ENCODE measurements at regions of chr6 and their contacts with region 1.

Region 1: GRCh38 chr6:45156075-45156474 is 172.1 kb upstream of the RUNX2 start:
- DNase-seq: no peak
- ATAC-seq: no peak
- H3K4me3 ChIP-seq: no peak overlapping the region
- H3K27ac ChIP-seq: no peak overlapping the region
- H3K4me1 ChIP-seq: no peaks in the 10 kb centered on the region
- H3K27me3 ChIP-seq: no peaks in the 10 kb centered on the region
- CTCF ChIP-seq: no peak

Region 2: GRCh38 chr6:44735630-44735963 is 420.5 kb before region 1 on chr6:
- intact Hi-C with region 1: no loop called
- DNase-seq: no peak
- ATAC-seq: no peak
- H3K4me3 ChIP-seq: no peak overlapping the region
- H3K27ac ChIP-seq: no peak overlapping the region
- H3K4me1 ChIP-seq: peaks cover 0 to 20% (median 4%) of the 10 kb centered on the region in 9 donors
- H3K27me3 ChIP-seq: no peaks in the 10 kb centered on the region
- CTCF ChIP-seq: no peak

Region 3: DNA sequence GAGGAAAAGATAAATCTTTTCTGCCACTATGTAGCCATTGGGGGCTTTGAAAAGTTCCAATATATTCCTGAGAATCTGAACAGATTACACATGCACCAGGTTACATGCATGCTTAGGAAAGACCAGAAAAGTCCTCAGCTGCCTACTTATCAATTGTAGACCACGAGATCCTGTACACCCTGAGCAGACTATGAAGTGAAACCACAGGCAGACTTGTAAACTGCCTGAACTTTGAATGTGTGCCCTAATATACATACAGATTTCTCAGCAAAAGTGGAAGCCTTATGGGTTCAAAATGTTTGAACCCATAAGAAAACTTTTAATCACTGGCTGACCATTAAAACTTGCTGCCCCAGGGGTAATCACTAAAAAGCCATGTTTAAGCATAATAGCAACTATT is 101.5 kb before region 1 on chr6:
- intact Hi-C with region 1: no loop called
- DNase-seq: no peak
- ATAC-seq: no peak
- H3K4me3 ChIP-seq: no peak overlapping the region
- H3K27ac ChIP-seq: no peak overlapping the region
- H3K4me1 ChIP-seq: no peaks in the 10 kb centered on the region
- H3K27me3 ChIP-seq: no peaks in the 10 kb centered on the region
- CTCF ChIP-seq: no peak

Region 4: DNA sequence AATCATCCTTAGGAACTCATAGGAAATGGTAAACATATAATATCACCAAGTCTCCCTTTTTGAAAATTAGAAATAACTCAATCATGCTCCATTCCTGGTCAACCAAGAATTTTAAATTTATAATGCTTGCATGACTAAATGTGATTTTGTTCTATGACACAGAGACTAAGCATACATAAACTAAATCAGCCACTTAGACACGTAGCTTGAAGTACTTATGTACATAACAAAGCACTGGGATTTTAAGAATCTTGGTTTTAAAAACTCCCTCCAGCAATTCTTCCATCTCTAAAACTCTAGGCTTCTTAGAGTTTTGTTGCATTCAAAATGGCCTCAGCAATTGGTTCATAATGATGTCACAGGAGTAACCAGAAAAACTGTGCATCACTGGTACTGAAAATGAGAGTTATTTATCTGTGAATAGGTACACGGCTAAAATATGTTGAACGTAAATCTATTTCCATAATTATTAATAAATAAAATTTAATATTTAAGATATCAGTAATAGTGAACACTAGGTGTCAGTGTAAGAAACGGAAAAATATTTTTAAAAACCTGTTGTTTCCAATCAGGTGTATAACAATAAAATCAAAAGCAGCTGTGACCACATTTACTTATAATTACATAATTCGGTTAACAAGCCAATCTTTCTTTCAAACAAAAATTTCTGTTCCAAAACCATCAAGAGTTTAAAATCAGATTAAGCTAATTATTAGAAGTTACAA is 69.6 kb before region 1 on chr6:
- intact Hi-C with region 1: no loop called
- DNase-seq: no peak
- ATAC-seq: no peak
- H3K4me3 ChIP-seq: no peak overlapping the region
- H3K27ac ChIP-seq: no peak overlapping the region
- H3K4me1 ChIP-seq: no peaks in the 10 kb centered on the region
- H3K27me3 ChIP-seq: no peaks in the 10 kb centered on the region
- CTCF ChIP-seq: peak in 2 of 9 donors; percentile 7 to 8

Region 5: GRCh38 chr6:45138765-45139164 is 17.3 kb before region 1 on chr6:
- intact Hi-C with region 1: loop called in 1 of 10 experiments (anchors 1 kb)
- DNase-seq: no peak
- ATAC-seq: no peak
- H3K4me3 ChIP-seq: no peak overlapping the region
- H3K27ac ChIP-seq: no peak overlapping the region
- H3K4me1 ChIP-seq: no peaks in the 10 kb centered on the region
- H3K27me3 ChIP-seq: no peaks in the 10 kb centered on the region
- CTCF ChIP-seq: no peak

Measured in heart right ventricle (tissue), 16 donors.